Heart left ventricle (tissue), 16 donors: ENCODE measurements at regions of chr1 and their contacts with region 1.

Region 1: GRCh38 chr1:116372587-116373444 is at the start of gene ATP1A1:
- DNase-seq: peak; percentile 97 to 99 (median 98)
- ATAC-seq: peak; percentile 76 to 89 (median 83)
- H3K4me3 ChIP-seq: peak within 1 kb of the TSS; percentile 73 to 95 (median 88)
- H3K27ac ChIP-seq: peak within 1 kb of the TSS; percentile 89 to 99 (median 97)
- H3K4me1 ChIP-seq: peaks cover 0 to 49% (median 40%) of the 10 kb centered on the region in 12 donors
- H3K27me3 ChIP-seq: no peaks in the 10 kb centered on the region
- CTCF ChIP-seq: peak in 3 of 12 donors; percentile 9 to 38 (median 36)
- POLR2A ChIP-seq: peak; percentile 99 to 100
- total RNA-seq, gene ATP1A1: 175 to 436 (median 241) TPM

Region 2: GRCh38 chr1:116151739-116152576 is 220.9 kb before region 1 on chr1:
- intact Hi-C with region 1: loop called in 6 of 10 experiments (anchors 5 to 10 kb)
- DNase-seq: peak; percentile 77 to 86 (median 79)
- ATAC-seq: peak; percentile 60 to 98 (median 94)
- H3K4me3 ChIP-seq: peak overlapping the region in 10 of 12 donors; percentile 38 to 65 (median 54)
- H3K27ac ChIP-seq: peak overlapping the region; percentile 3 to 87 (median 70)
- H3K4me1 ChIP-seq: peaks cover 0 to 27% (median 12%) of the 10 kb centered on the region in 12 donors
- H3K27me3 ChIP-seq: no peaks in the 10 kb centered on the region
- CTCF ChIP-seq: peak; percentile 85 to 98 (median 96)
- POLR2A ChIP-seq: peak in 1 of 2 donors; percentile 24

Region 3: GRCh38 chr1:116168277-116169097 is 204.3 kb before region 1 on chr1:
- intact Hi-C with region 1: loop called in 3 of 10 experiments (anchors 5 kb)
- DNase-seq: peak; percentile 84 to 87 (median 86)
- ATAC-seq: peak; percentile 35 to 93 (median 83)
- H3K4me3 ChIP-seq: peak overlapping the region; percentile 12 to 77 (median 60)
- H3K27ac ChIP-seq: peak overlapping the region; percentile 51 to 85 (median 64)
- H3K4me1 ChIP-seq: peaks cover 0 to 53% (median 28%) of the 10 kb centered on the region in 12 donors
- H3K27me3 ChIP-seq: no peaks in the 10 kb centered on the region
- CTCF ChIP-seq: peak; percentile 85 to 98 (median 94)
- POLR2A ChIP-seq: no peak

Region 4: DNA sequence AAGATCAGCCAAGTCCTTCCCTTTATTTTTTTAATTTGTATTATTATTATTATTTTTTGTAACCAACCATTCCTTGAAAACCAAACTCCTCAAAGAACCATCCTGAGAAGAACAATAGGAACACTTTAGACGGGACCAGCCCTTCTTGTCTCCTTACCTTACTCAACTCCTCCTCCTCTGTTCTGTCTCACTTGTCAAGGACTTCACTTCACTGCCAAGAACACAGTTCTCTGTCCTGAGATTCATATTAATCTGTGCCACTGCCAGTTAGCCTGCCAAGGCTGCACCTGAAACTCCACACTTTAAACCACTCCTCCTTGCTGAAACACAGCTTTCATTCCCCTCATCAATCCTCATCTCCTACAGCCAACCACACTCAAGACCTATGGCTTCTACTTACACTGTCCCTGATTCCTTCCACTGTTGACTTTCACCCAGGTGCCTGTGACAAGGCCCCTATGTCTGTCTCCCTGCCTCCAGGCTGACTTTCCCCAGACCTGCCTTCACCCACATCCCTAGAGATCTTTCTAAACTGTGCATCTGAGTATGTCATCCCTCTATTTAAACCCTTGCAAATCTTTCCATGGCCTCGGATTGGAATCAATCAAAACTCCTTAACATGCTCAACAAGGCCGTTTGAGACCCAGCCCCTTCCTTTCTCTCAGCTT is 73.4 kb before region 1 on chr1:
- intact Hi-C with region 1: no loop called
- DNase-seq: no peak
- ATAC-seq: no peak
- H3K4me3 ChIP-seq: no peak overlapping the region
- H3K27ac ChIP-seq: no peak overlapping the region
- H3K4me1 ChIP-seq: no peaks in the 10 kb centered on the region
- H3K27me3 ChIP-seq: no peaks in the 10 kb centered on the region
- CTCF ChIP-seq: no peak
- POLR2A ChIP-seq: no peak

Region 5: DNA sequence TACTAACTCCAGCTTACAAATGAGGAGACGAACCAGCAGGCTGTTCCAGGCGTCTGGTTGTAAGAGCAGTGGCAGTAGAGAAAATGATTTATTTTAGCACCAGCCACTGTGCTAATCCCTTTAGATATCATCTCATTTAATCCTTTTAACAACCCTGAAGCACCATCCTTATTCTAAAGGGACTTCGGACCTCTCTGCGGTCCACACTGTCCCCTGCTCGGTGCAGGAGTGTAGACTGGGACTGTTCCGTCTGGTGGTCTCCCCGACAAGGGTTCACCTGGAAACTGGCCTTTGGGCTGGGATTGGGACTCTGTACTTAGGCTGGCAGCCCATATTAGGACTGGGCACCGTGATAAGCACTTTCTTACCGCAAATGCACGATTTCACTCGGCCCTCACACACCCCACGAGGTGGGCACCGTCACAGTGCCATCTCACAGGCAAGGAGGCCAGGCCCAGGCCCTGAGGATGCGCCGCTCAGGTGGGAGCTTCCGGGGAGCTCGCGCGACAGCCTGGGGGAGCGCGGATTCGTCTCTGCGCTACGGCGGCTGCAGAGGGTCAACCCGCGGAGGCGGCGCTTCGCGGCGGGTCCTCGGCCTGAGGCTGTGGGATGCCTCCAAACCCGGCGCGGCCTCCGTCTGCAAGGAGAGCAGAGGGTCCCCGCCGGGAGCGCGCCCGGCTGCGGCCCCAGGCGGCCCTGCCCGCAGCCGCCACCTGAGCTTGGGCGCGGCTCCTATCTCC is 45.4 kb after region 1 on chr1:
- intact Hi-C with region 1: loop called in 4 of 10 experiments (anchors 5 kb)
- DNase-seq: peak; percentile 85 to 93 (median 88)
- ATAC-seq: peak; percentile 24 to 79 (median 72)
- H3K4me3 ChIP-seq: peak overlapping the region; percentile 65 to 88 (median 78)
- H3K27ac ChIP-seq: peak overlapping the region; percentile 63 to 95 (median 84)
- H3K4me1 ChIP-seq: peaks cover 4 to 44% (median 22%) of the 10 kb centered on the region in 12 donors
- H3K27me3 ChIP-seq: no peaks in the 10 kb centered on the region
- CTCF ChIP-seq: peak in 1 of 12 donors; percentile 32
- POLR2A ChIP-seq: peak in 1 of 2 donors; percentile 51